ENCODE measurements at regions of chr20 and their contacts with region 1.

Region 1: GRCh38 chr20:3218307-3218988 is 9.2 kb downstream of the ITPA start:
- DNase-seq: peak; percentile 80
- ATAC-seq: peak; percentile 94
- H3K4me3 Mint-ChIP-seq: no peak overlapping the region
- H3K27ac Mint-ChIP-seq: no peak overlapping the region
- H3K4me1 Mint-ChIP-seq: peaks cover 15% of the 10 kb centered on the region
- H3K27me3 Mint-ChIP-seq: no peaks in the 10 kb centered on the region
- CTCF ChIP-seq: peak; percentile 96

Region 2: DNA sequence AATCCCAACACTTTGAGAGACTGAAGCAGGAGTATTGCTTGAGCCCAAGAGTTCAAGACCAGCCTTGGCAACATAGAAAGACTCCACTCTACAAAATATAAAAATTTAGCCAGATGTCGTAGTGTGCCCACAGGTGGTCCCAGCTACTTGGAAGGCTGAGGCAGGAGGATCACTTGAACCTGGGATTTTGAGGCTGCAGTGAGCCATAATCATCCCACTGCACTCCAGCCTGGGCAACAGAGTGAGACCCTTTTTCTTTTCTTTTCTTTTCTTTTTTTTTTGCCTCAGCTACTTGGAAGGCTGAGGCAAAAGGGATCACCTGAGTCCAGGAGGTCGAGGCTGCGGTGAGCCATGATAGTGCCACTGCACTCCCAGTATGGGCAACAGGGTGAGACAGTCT is 76.7 kb before region 1 on chr20:
- CTCF ChIA-PET with region 1: no interaction called
- POLR2A ChIA-PET with region 1: no interaction called
- intact Hi-C with region 1: no loop called
- DNase-seq: no peak
- ATAC-seq: no peak
- H3K4me3 Mint-ChIP-seq: no peak overlapping the region
- H3K27ac Mint-ChIP-seq: no peak overlapping the region
- H3K4me1 Mint-ChIP-seq: peaks cover 22% of the 10 kb centered on the region
- H3K27me3 Mint-ChIP-seq: no peaks in the 10 kb centered on the region
- CTCF ChIP-seq: no peak

Region 3: DNA sequence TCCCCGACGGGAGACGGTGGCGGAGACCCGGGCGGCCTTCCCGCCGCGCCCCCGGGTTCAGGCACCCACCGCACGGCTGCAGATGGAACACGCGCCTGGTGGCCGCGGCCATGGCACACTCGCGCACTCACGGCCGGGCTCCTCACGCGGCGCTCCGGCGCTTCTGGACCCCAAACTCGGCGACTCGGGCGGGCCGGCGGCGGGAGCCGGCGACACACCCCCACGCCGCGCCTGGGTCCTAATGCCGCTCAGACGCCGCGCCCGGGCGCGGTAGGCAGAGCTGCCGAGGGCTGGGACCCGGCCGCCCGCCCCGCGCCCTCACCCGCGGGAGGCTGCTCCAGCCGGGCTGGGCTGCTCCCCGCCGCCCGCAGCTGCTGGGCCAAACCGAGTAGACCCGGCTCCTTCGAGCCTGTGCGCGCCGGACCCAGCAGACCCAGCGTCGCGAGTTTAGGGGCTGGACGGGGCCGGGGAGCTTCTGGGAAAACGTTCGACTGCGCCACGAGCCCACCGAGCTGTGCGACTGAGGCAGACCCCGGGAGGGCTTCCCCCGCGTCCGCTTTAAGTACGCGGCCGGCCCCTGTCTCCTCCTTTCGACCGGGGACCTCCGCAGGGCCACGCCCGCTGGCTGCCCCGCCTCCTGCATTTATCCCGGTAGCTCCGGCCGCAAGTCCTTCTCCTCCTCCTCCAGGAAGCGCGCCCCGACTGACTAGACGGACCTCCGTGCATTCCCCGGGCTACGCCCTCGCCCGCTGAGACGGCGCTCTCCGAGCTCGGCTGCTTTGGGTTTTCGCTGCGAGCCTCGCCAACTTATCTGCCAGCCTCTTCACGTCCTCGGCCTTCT is 20.8 kb after region 1 on chr20 and contains the start of gene SLC4A11:
- CTCF ChIA-PET with region 1: interaction called, 14 read pairs
- POLR2A ChIA-PET with region 1: interaction called, 4 read pairs
- intact Hi-C with region 1: no loop called
- DNase-seq: peak; percentile 49
- ATAC-seq: peak; percentile 55
- H3K4me3 Mint-ChIP-seq: peak within 1 kb of the TSS; percentile 75
- H3K27ac Mint-ChIP-seq: no peak within 1 kb of the TSS
- H3K4me1 Mint-ChIP-seq: peaks cover 6% of the 10 kb centered on the region
- H3K27me3 Mint-ChIP-seq: peaks cover 52% of the 10 kb centered on the region
- CTCF ChIP-seq: no peak
- total RNA-seq, gene SLC4A11: 1.8 to 2.8 TPM

Region 4: GRCh38 chr20:3312940-3313682 is 94.7 kb after region 1 on chr20:
- CTCF ChIA-PET with region 1: interaction called, 63 read pairs
- POLR2A ChIA-PET with region 1: no interaction called
- intact Hi-C with region 1: loop called (anchors 5 kb)
- DNase-seq: no peak
- ATAC-seq: no peak
- H3K4me3 Mint-ChIP-seq: no peak overlapping the region
- H3K27ac Mint-ChIP-seq: no peak overlapping the region
- H3K4me1 Mint-ChIP-seq: no peaks in the 10 kb centered on the region
- H3K27me3 Mint-ChIP-seq: no peaks in the 10 kb centered on the region
- CTCF ChIP-seq: no peak

Region 5: GRCh38 chr20:3330046-3330741 is 111.7 kb after region 1 on chr20:
- CTCF ChIA-PET with region 1: interaction called, 11 read pairs
- POLR2A ChIA-PET with region 1: interaction called, 3 read pairs
- intact Hi-C with region 1: no loop called
- DNase-seq: no peak
- ATAC-seq: no peak
- H3K4me3 Mint-ChIP-seq: no peak overlapping the region
- H3K27ac Mint-ChIP-seq: no peak overlapping the region
- H3K4me1 Mint-ChIP-seq: peaks cover 6% of the 10 kb centered on the region
- H3K27me3 Mint-ChIP-seq: no peaks in the 10 kb centered on the region
- CTCF ChIP-seq: no peak